Mammary epithelial cell (primary cell): ENCODE measurements at regions of chr7 and their contacts with region 1.

Region 1: GRCh38 chr7:98280791-98281756 is at the start of gene BRI3:
- DNase-seq: peak; percentile 78
- H3K4me3 ChIP-seq: peak within 1 kb of the TSS; percentile 68 to 81 (median 77)
- H3K27ac ChIP-seq: peak within 1 kb of the TSS; percentile 67
- H3K4me1 ChIP-seq: peaks cover 45% of the 10 kb centered on the region
- H3K27me3 ChIP-seq: no peaks in the 10 kb centered on the region
- CTCF ChIP-seq: no peak
- total RNA-seq, gene BRI3: 24.5 to 158 TPM

Region 2: GRCh38 chr7:98251841-98252639 is 29.0 kb before region 1 on chr7 and contains the start of gene TECPR1:
- CTCF ChIA-PET with region 1: no interaction called
- dilution Hi-C with region 1: no loop called
- in situ Hi-C with region 1: no loop called
- intact Hi-C with region 1: loop called (anchors 1 kb)
- DNase-seq: peak; percentile 90
- H3K4me3 ChIP-seq: peak within 1 kb of the TSS; percentile 85 to 99 (median 96)
- H3K27ac ChIP-seq: peak within 1 kb of the TSS; percentile 46
- H3K4me1 ChIP-seq: peaks cover 5% of the 10 kb centered on the region
- H3K27me3 ChIP-seq: no peaks in the 10 kb centered on the region
- CTCF ChIP-seq: peak in 1 of 2 donors; percentile 14
- total RNA-seq, gene TECPR1: 13.2 to 14.6 TPM

Region 3: GRCh38 chr7:98575878-98576277 is 294.8 kb after region 1 on chr7:
- CTCF ChIA-PET with region 1: no interaction called
- dilution Hi-C with region 1: no loop called
- in situ Hi-C with region 1: no loop called
- intact Hi-C with region 1: no loop called
- DNase-seq: no peak
- H3K4me3 ChIP-seq: no peak overlapping the region
- H3K27ac ChIP-seq: no peak overlapping the region
- H3K4me1 ChIP-seq: no peaks in the 10 kb centered on the region
- H3K27me3 ChIP-seq: no peaks in the 10 kb centered on the region
- CTCF ChIP-seq: no peak